Activated CD8-positive, alpha-beta T cell treated with anti-CD3 and anti-CD28 coated beads, Interleukin-2, amount 10 ng/mL, durations not matched to agents 7 days and 5 days (primary cell): ENCODE measurements at regions of chr1 and their contacts with region 1.

Region 1: DNA sequence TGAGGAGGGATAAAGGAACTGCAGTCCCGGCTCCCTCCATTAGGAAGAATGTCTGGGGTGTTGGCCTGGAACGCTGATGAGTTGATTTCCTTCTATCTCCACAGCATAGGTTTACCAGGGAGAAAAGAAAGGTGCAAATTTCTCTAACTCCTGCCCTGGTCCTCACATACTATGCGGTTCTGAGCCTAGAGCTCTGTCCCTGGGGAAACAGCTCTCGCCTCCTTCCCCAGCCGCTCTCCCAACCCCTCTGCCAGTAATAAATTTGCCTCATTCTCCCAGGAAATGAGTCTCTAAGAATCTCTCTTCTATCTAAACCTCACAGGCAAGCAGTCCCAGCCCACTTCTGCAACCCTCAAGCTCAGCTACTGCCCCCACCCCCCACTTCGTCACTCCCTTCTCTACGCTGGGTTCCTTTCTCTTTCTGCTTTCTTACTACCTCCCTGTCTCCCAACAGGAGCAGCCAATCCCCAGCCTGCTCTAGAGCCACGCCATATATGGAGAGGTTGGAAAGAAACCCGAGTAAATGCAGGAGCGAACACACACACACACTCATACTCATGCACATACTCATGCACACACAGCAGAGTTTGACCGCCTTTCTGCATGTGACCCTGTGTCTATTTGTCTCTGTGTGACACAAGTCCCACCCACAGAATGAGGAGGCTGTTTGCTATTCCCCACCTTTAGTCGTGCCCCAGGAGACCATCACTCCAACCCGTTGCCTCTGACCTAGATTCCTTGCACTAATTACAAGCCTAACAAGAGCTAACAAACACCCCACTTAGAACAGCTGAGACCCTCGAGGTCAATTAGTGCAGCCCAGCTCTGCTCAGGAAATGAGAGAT is 13.4 kb downstream of the PLEKHO1 start:
- DNase-seq: peak; percentile 58
- ATAC-seq: peak; percentile 50
- H3K4me3 Mint-ChIP-seq: peak overlapping the region; percentile 9
- H3K27ac Mint-ChIP-seq: peak overlapping the region; percentile 76
- H3K4me1 Mint-ChIP-seq: peaks cover 78% of the 10 kb centered on the region
- H3K27me3 Mint-ChIP-seq: no peaks in the 10 kb centered on the region

Region 2: DNA sequence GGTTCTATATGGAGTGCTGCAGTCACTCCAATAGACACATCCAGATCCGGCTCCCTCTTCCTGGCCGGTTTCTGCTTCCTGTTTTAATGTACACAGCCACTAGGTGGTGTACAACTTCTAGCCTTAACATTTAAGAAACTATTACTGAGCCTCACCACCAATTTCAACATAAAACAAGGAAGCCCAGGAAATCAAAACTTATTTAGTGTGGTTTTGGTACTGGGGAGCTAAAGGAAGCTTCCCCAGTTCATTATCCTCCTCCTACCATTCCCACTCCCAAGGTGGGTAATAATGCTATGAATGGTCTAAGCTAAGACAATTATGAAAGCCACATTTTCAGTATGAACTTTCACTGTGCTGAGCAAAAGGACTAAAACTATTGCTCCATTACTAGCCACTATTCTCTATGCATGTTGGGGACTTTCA is 200.9 kb before region 1 on chr1:
- CTCF ChIA-PET with region 1: interaction called, 22 read pairs
- POLR2A ChIA-PET with region 1: no interaction called
- DNase-seq: peak; percentile 62
- ATAC-seq: peak; percentile 91
- H3K4me3 Mint-ChIP-seq: no peak overlapping the region
- H3K27ac Mint-ChIP-seq: no peak overlapping the region
- H3K4me1 Mint-ChIP-seq: peaks cover 16% of the 10 kb centered on the region
- H3K27me3 Mint-ChIP-seq: no peaks in the 10 kb centered on the region

Region 3: DNA sequence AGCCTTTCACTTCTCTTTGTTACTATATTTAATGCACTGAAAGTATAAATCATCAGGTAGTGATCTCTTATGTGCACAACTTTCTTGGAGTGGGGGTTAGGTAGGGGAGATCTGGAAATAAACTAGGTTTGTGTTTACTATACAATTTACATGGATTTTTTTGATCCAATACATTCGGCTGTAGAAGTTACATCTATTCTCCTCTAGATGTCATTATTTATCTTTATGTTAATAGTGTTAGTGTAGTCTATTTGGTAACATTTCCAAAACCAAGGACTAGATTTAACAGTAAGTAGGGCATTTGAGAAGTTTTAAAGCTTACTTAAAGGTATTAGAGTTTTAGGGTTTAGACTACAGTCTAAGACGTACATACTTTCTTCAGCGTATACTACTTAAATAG is 90.1 kb before region 1 on chr1:
- CTCF ChIA-PET with region 1: interaction called, 240 read pairs
- POLR2A ChIA-PET with region 1: interaction called, 5 read pairs
- DNase-seq: no peak
- ATAC-seq: peak; percentile 81
- H3K4me3 Mint-ChIP-seq: no peak overlapping the region
- H3K27ac Mint-ChIP-seq: peak overlapping the region; percentile 5
- H3K4me1 Mint-ChIP-seq: peaks cover 52% of the 10 kb centered on the region
- H3K27me3 Mint-ChIP-seq: no peaks in the 10 kb centered on the region

Region 4: DNA sequence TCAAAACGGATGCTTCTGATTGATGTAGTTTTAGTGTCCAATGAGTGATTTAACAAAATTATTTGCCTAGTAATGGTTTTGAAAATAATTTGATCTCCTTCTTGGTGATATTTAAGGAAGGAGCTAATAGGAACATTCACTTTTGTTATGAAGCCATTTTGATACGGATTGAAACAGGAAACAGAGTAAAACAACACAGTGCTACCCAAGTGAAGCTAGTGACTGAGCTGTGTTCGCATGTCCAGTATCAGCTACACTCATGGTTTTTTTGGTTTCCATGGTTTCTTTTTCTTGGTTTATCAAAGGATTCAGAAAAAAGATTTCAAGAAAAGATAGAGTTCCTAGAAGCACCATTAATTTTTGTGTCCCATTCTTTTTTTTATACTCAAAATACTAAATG is 53.5 kb before region 1 on chr1:
- CTCF ChIA-PET with region 1: interaction called, 19 read pairs
- POLR2A ChIA-PET with region 1: interaction called, 7 read pairs
- DNase-seq: peak; percentile 44
- ATAC-seq: peak; percentile 82
- H3K4me3 Mint-ChIP-seq: peak overlapping the region; percentile 72
- H3K27ac Mint-ChIP-seq: peak overlapping the region; percentile 91
- H3K4me1 Mint-ChIP-seq: peaks cover 76% of the 10 kb centered on the region
- H3K27me3 Mint-ChIP-seq: no peaks in the 10 kb centered on the region

Region 5: GRCh38 chr1:150176593-150176992 is 13.5 kb after region 1 on chr1:
- CTCF ChIA-PET with region 1: interaction called, 18 read pairs
- POLR2A ChIA-PET with region 1: no interaction called
- DNase-seq: no peak
- ATAC-seq: no peak
- H3K4me3 Mint-ChIP-seq: no peak overlapping the region
- H3K27ac Mint-ChIP-seq: no peak overlapping the region
- H3K4me1 Mint-ChIP-seq: peaks cover 2% of the 10 kb centered on the region
- H3K27me3 Mint-ChIP-seq: peaks cover 2% of the 10 kb centered on the region